CD8-positive, alpha-beta T cell (primary cell): ENCODE measurements at regions of chr11 and their contacts with region 1.

Region 1: GRCh38 chr11:124837491-124837856 is 27.8 kb upstream of the ROBO3 start:
- DNase-seq: peak in 2 of 9 experiments; percentile 19 to 45
- ATAC-seq: peak; percentile 45
- H3K4me3 ChIP-seq: no peak overlapping the region
- H3K4me3 Mint-ChIP-seq: no peak overlapping the region
- H3K27ac ChIP-seq: no peak overlapping the region
- H3K27ac Mint-ChIP-seq: no peak overlapping the region
- H3K4me1 ChIP-seq: peaks cover 7% of the 10 kb centered on the region
- H3K4me1 Mint-ChIP-seq: peaks cover 17% of the 10 kb centered on the region
- H3K27me3 ChIP-seq: peaks cover 11 to 14% of the 10 kb centered on the region in 2 experiments
- H3K27me3 Mint-ChIP-seq: peaks cover 56% of the 10 kb centered on the region
- CTCF ChIP-seq: no peak

Region 2: DNA sequence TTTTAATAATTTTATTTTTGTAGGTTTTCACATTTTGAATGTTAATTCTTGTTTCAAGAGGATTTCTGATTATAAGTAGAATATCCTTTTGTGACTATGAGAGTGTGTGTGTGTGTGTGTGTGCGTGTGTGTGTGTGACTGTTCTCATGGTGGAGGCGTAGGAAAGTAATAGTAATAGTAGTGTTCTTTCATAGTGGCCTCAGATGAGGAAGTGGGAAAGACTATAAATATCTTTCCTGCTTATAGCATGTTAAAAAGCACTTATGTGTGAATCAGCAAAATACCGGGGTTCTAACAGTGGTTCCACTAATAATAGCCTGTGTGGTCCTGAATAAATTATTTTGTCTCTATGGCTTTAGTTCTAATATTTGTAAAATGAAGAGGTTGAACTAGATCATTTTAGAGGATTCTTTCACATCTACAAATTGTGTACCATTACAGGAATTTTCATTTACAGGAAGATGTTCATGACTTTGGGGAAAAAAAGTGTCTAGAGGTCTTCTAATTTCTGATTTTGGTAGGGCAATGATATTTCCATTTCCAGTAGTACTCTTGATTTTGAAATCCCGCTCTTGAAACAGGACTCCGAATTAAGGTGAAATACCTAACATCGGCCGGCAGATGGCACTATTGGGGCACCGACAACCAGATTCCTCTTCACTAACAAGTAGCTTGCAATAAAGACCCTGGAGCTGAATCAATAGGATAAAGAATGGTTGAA is 766.4 kb before region 1 on chr11:
- CTCF ChIA-PET with region 1: no interaction called
- POLR2A ChIA-PET with region 1: no interaction called
- intact Hi-C with region 1: loop called in 1 of 2 experiments (anchors 5 kb)
- DNase-seq: peak; percentile 28 to 74 (median 61)
- ATAC-seq: peak; percentile 58
- H3K4me3 ChIP-seq: no peak overlapping the region
- H3K4me3 Mint-ChIP-seq: no peak overlapping the region
- H3K27ac ChIP-seq: no peak overlapping the region
- H3K27ac Mint-ChIP-seq: no peak overlapping the region
- H3K4me1 ChIP-seq: no peaks in the 10 kb centered on the region
- H3K4me1 Mint-ChIP-seq: peaks cover 9% of the 10 kb centered on the region
- H3K27me3 ChIP-seq: peaks cover 6 to 9% of the 10 kb centered on the region in 2 experiments
- H3K27me3 Mint-ChIP-seq: peaks cover 39% of the 10 kb centered on the region
- CTCF ChIP-seq: peak; percentile 89

Region 3: GRCh38 chr11:124644426-124645280 is 192.8 kb before region 1 on chr11:
- CTCF ChIA-PET with region 1: interaction called, 59 read pairs
- POLR2A ChIA-PET with region 1: interaction called, 3 read pairs
- intact Hi-C with region 1: loop called (anchors 1 to 2 kb)
- DNase-seq: peak in 6 of 9 experiments; percentile 4 to 67 (median 44)
- ATAC-seq: peak; percentile 79
- H3K4me3 ChIP-seq: no peak overlapping the region
- H3K4me3 Mint-ChIP-seq: no peak overlapping the region
- H3K27ac ChIP-seq: no peak overlapping the region
- H3K27ac Mint-ChIP-seq: no peak overlapping the region
- H3K4me1 ChIP-seq: no peaks in the 10 kb centered on the region
- H3K4me1 Mint-ChIP-seq: no peaks in the 10 kb centered on the region
- H3K27me3 ChIP-seq: no peaks in the 10 kb centered on the region
- H3K27me3 Mint-ChIP-seq: no peaks in the 10 kb centered on the region
- CTCF ChIP-seq: peak; percentile 79

Region 4: GRCh38 chr11:124746621-124747243 is 90.7 kb before region 1 on chr11:
- CTCF ChIA-PET with region 1: interaction called, 7 read pairs
- POLR2A ChIA-PET with region 1: no interaction called
- intact Hi-C with region 1: loop called in 1 of 2 experiments (anchors 5 kb)
- DNase-seq: peak; percentile 64 to 90 (median 79)
- ATAC-seq: peak; percentile 92
- H3K4me3 ChIP-seq: peak overlapping the region; percentile 87 to 98
- H3K4me3 Mint-ChIP-seq: peak overlapping the region; percentile 95
- H3K27ac ChIP-seq: peak overlapping the region; percentile 58 to 80
- H3K27ac Mint-ChIP-seq: peak overlapping the region; percentile 91
- H3K4me1 ChIP-seq: peaks cover 11% of the 10 kb centered on the region
- H3K4me1 Mint-ChIP-seq: peaks cover 15% of the 10 kb centered on the region
- H3K27me3 ChIP-seq: no peaks in the 10 kb centered on the region
- H3K27me3 Mint-ChIP-seq: peaks cover 2% of the 10 kb centered on the region
- CTCF ChIP-seq: peak; percentile 55

Region 5: DNA sequence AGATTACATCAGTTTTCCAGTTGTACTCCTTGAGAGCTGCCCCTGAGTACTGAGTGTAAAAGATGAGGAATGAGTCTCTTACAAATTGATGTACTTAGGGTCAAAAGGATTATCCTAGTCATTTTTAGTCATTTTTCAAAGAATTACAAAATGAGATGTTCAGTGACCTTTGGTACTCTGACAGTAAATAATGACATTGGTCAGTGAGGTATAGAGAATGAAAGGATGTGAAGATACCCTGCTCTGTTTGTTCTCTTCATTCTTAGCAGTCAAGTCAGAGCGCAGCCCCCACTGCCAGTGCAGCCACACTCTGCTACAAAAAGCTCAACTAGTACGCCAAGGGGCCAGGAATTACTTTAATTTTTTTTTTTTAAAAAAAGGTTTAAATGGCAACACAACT is 71.3 kb before region 1 on chr11:
- CTCF ChIA-PET with region 1: interaction called, 12 read pairs
- POLR2A ChIA-PET with region 1: no interaction called
- intact Hi-C with region 1: loop called (anchors 1 kb)
- DNase-seq: no peak
- ATAC-seq: no peak
- H3K4me3 ChIP-seq: no peak overlapping the region
- H3K4me3 Mint-ChIP-seq: no peak overlapping the region
- H3K27ac ChIP-seq: no peak overlapping the region
- H3K27ac Mint-ChIP-seq: no peak overlapping the region
- H3K4me1 ChIP-seq: peaks cover 7% of the 10 kb centered on the region
- H3K4me1 Mint-ChIP-seq: peaks cover 9% of the 10 kb centered on the region
- H3K27me3 ChIP-seq: peaks cover 6 to 7% of the 10 kb centered on the region in 2 experiments
- H3K27me3 Mint-ChIP-seq: peaks cover 2% of the 10 kb centered on the region
- CTCF ChIP-seq: no peak

Region 6: DNA sequence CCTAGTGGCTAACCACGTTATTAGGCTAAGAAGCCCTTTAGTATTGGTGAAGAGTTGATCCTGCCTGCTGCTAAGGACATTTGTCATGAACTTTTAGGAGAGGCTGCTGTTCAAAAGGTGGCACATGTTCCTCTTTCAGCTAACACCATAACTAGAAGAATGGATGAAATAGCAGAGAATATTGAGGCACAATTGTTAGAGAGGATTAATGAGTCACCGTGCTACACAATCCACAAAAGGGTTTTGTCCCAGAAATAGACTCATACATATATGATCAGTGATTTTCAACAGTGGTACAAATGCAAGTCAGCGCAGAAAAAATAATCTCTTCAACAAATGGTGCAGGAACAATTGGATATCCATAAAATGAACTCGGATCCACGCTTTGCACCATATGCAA is 30.3 kb before region 1 on chr11:
- CTCF ChIA-PET with region 1: interaction called, 16 read pairs
- POLR2A ChIA-PET with region 1: interaction called, 4 read pairs
- intact Hi-C with region 1: no loop called
- DNase-seq: no peak
- ATAC-seq: no peak
- H3K4me3 ChIP-seq: no peak overlapping the region
- H3K4me3 Mint-ChIP-seq: no peak overlapping the region
- H3K27ac ChIP-seq: no peak overlapping the region
- H3K27ac Mint-ChIP-seq: no peak overlapping the region
- H3K4me1 ChIP-seq: no peaks in the 10 kb centered on the region
- H3K4me1 Mint-ChIP-seq: no peaks in the 10 kb centered on the region
- H3K27me3 ChIP-seq: no peaks in the 10 kb centered on the region
- H3K27me3 Mint-ChIP-seq: no peaks in the 10 kb centered on the region
- CTCF ChIP-seq: no peak

Region 7: DNA sequence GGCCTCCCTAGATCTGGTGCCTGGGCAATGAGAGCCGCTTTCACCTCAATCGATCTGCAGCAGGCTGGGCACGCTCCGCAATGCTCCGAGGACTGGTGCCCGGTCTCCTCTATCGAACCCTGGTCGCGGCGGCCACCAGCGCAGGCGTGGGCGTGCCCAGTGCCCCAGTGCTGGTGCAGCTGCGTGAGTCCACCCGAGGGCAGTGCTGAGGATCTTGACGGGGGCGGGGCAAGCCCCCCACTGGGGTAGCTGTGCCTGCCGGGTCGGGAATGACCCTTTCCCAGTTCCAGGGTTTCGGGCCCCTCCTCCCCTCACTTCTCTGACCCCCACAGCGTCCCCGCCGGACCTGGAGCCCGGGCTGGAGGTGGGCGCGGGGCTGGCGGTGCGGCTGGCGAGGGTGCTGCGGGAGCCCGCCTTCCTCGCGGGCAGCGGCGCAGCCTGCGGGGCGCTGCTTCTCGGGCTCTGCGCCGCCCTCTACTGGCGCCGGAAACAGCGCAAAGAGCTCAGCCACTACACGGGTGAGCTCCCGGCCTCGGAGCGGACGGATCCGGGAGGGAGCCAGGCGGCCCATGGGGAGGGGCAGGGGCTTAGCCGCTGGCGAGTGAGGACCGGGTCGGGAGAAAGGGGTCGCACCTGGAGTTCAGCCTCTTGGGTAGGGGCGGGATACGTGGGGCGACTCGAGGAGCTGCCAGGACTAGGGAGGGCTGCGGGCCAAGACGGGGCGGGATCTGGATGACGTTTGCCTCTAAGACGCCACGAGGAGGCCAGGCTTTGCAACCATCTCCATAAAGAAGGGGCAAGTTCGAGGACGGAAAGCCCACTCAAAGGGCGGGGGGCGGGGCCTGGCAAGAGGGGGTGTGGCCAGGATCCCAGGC is 38.7 kb after region 1 on chr11:
- CTCF ChIA-PET with region 1: interaction called, 3 read pairs
- POLR2A ChIA-PET with region 1: interaction called, 4 read pairs
- intact Hi-C with region 1: loop called in 1 of 2 experiments (anchors 1 kb)
- DNase-seq: peak; percentile 60 to 90 (median 76)
- ATAC-seq: peak; percentile 91
- H3K4me3 ChIP-seq: peak overlapping the region; percentile 75 to 88
- H3K4me3 Mint-ChIP-seq: peak overlapping the region; percentile 93
- H3K27ac ChIP-seq: peak overlapping the region; percentile 77 to 96
- H3K27ac Mint-ChIP-seq: peak overlapping the region; percentile 92
- H3K4me1 ChIP-seq: peaks cover 16% of the 10 kb centered on the region
- H3K4me1 Mint-ChIP-seq: peaks cover 24% of the 10 kb centered on the region
- H3K27me3 ChIP-seq: no peaks in the 10 kb centered on the region
- H3K27me3 Mint-ChIP-seq: peaks cover 27% of the 10 kb centered on the region
- CTCF ChIP-seq: peak; percentile 65